Endothelial cell of umbilical vein (primary cell): ENCODE measurements at regions of chr10 and their contacts with region 1.

Region 1: GRCh38 chr10:113678690-113679462 is 836 bp upstream of the CASP7 start:
- DNase-seq: peak; percentile 87
- H3K4me3 ChIP-seq: peak overlapping the region; percentile 77 to 82 (median 78)
- H3K27ac ChIP-seq: peak overlapping the region; percentile 90
- H3K4me1 ChIP-seq: peaks cover 11% of the 10 kb centered on the region
- H3K27me3 ChIP-seq: no peaks in the 10 kb centered on the region
- CTCF ChIP-seq: peak; percentile 73 to 81
- POLR2A ChIP-seq: no peak

Region 2: GRCh38 chr10:113576852-113577251 is 102.0 kb before region 1 on chr10:
- CTCF ChIA-PET with region 1: no interaction called
- POLR2A ChIA-PET with region 1: no interaction called
- dilution Hi-C with region 1: no loop called
- intact Hi-C with region 1: no loop called
- DNase-seq: peak; percentile 10
- H3K4me3 ChIP-seq: no peak overlapping the region
- H3K27ac ChIP-seq: no peak overlapping the region
- H3K4me1 ChIP-seq: no peaks in the 10 kb centered on the region
- H3K27me3 ChIP-seq: peaks cover 0 to under 1% of the 10 kb centered on the region in 2 experiments
- CTCF ChIP-seq: no peak
- POLR2A ChIP-seq: no peak

Region 3: DNA sequence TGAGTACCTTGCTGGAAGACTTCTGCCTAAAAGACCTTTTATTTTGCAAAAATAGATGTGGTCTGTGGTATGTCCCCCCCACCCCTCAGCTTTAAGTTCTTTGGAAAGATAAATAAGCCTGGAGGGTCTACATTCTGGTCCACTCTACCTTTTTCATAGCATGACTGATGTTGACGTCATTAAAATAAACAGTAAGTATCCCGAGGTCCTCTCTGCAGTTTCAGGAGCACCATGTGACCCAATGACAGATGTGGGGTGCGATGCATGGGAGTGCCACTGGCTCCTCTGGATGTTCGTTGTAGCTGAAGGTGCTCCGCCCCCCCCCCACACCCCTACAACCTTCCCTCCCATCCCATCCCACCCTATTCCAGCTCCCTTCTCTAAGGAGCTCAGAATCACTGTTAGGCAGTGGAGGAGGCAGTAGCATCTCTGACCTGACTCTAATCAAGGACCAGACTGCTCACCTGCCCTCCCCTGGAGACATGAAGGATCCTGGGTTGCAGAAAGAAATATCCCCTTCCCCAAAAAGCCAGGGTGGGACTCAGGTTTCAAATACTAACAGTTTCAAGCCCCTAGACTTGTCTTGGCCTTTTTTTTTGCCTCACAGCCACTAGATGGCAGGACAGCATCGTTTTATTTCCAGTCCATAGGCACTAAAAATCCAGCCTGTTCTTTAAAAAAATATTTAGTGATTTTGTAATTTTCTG is 25.9 kb after region 1 on chr10:
- CTCF ChIA-PET with region 1: interaction called, 23 read pairs
- POLR2A ChIA-PET with region 1: no interaction called
- dilution Hi-C with region 1: no loop called
- intact Hi-C with region 1: loop called (anchors 1 kb)
- DNase-seq: peak; percentile 50
- H3K4me3 ChIP-seq: no peak overlapping the region
- H3K27ac ChIP-seq: no peak overlapping the region
- H3K4me1 ChIP-seq: peaks cover 20% of the 10 kb centered on the region
- H3K27me3 ChIP-seq: no peaks in the 10 kb centered on the region
- CTCF ChIP-seq: peak; percentile 52 to 59
- POLR2A ChIP-seq: no peak

Region 4: GRCh38 chr10:113854011-113854760 is 175.3 kb after region 1 on chr10 and contains the starts of genes DCLRE1A and NHLRC2:
- CTCF ChIA-PET with region 1: interaction called, 3 read pairs
- POLR2A ChIA-PET with region 1: no interaction called
- dilution Hi-C with region 1: no loop called
- intact Hi-C with region 1: loop called (anchors 2 kb)
- DNase-seq: peak; percentile 84
- H3K4me3 ChIP-seq: peak within 1 kb of the TSS; percentile 87 to 99 (median 87)
- H3K27ac ChIP-seq: peak within 1 kb of the TSS; percentile 96
- H3K4me1 ChIP-seq: peaks cover 43% of the 10 kb centered on the region
- H3K27me3 ChIP-seq: no peaks in the 10 kb centered on the region
- CTCF ChIP-seq: no peak
- POLR2A ChIP-seq: no peak
- total RNA-seq, gene DCLRE1A: 5.4 and 6.7 TPM in 2 replicates
- total RNA-seq, gene NHLRC2: 28.2 and 34.5 TPM in 2 replicates

Region 5: GRCh38 chr10:114173921-114174694 is 495.2 kb after region 1 on chr10 and contains the start of gene CCDC186:
- CTCF ChIA-PET with region 1: no interaction called
- POLR2A ChIA-PET with region 1: no interaction called
- dilution Hi-C with region 1: no loop called
- intact Hi-C with region 1: loop called (anchors 5 kb)
- DNase-seq: peak; percentile 93
- H3K4me3 ChIP-seq: peak within 1 kb of the TSS; percentile 39 to 99 (median 66)
- H3K27ac ChIP-seq: peak within 1 kb of the TSS; percentile 49
- H3K4me1 ChIP-seq: peaks cover 18% of the 10 kb centered on the region
- H3K27me3 ChIP-seq: peaks cover 3 to 5% of the 10 kb centered on the region in 2 experiments
- CTCF ChIP-seq: no peak
- POLR2A ChIP-seq: peak; percentile 74
- total RNA-seq, gene CCDC186: 13.4 and 13.9 TPM in 2 replicates